T-cell (primary cell): ENCODE measurements at regions of chr6 and their contacts with region 1.

Region 1: DNA sequence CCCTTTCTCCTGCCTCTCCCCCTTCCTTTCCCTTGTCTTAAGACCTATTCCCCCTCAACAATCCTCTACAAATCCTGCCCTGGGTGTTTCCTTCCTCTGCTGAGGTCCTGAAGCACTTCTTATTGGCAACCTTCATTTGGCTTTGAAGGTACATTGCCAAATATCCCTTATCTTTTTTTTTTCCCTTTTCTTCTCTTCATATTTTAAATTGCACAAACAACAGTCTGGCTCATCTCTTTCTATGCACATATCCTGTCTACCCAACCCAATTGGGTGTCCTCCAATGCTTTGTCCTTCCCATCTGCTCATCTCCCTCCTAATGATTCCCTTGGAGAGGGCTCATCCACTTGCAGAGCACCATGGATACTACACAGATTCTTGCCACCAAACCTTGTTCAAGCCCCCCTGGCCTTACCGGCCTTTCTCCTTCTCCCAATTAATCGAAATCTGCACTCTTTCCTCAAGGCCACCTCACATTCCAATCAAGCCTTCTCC is 537.9 kb upstream of the JARID2 start:
- DNase-seq: no peak
- ATAC-seq: no peak
- H3K4me3 ChIP-seq: no peak overlapping the region
- H3K4me3 Mint-ChIP-seq: no peak overlapping the region
- H3K27ac ChIP-seq: no peak overlapping the region
- H3K27ac Mint-ChIP-seq: no peak overlapping the region
- H3K4me1 ChIP-seq: peaks cover 0 to 7% of the 10 kb centered on the region in 2 experiments
- H3K4me1 Mint-ChIP-seq: peaks cover 6 to 18% (median 9%) of the 10 kb centered on the region in 3 donors
- H3K27me3 ChIP-seq: peaks cover 0 to 4% of the 10 kb centered on the region in 2 experiments
- H3K27me3 Mint-ChIP-seq: no peaks in the 10 kb centered on the region

Region 2: GRCh38 chr6:13838616-13839015 is 869.4 kb before region 1 on chr6:
- CTCF ChIA-PET with region 1: no interaction called
- POLR2A ChIA-PET with region 1: no interaction called
- DNase-seq: no peak
- ATAC-seq: no peak
- H3K4me3 ChIP-seq: no peak overlapping the region
- H3K4me3 Mint-ChIP-seq: no peak overlapping the region
- H3K27ac ChIP-seq: no peak overlapping the region
- H3K27ac Mint-ChIP-seq: no peak overlapping the region
- H3K4me1 ChIP-seq: no peaks in the 10 kb centered on the region
- H3K4me1 Mint-ChIP-seq: no peaks in the 10 kb centered on the region
- H3K27me3 ChIP-seq: no peaks in the 10 kb centered on the region
- H3K27me3 Mint-ChIP-seq: peaks cover 0 to 2% of the 10 kb centered on the region in 2 donors

Region 3: GRCh38 chr6:14559754-14560536 is 148.1 kb before region 1 on chr6:
- CTCF ChIA-PET with region 1: no interaction called
- POLR2A ChIA-PET with region 1: no interaction called
- DNase-seq: no peak
- ATAC-seq: no peak
- H3K4me3 ChIP-seq: no peak overlapping the region
- H3K4me3 Mint-ChIP-seq: no peak overlapping the region
- H3K27ac ChIP-seq: no peak overlapping the region
- H3K27ac Mint-ChIP-seq: no peak overlapping the region
- H3K4me1 ChIP-seq: no peaks in the 10 kb centered on the region
- H3K4me1 Mint-ChIP-seq: no peaks in the 10 kb centered on the region
- H3K27me3 ChIP-seq: peaks cover 0 to 2% of the 10 kb centered on the region in 2 experiments
- H3K27me3 Mint-ChIP-seq: no peaks in the 10 kb centered on the region

Region 4: GRCh38 chr6:15171026-15171425 is 463.0 kb after region 1 on chr6:
- CTCF ChIA-PET with region 1: no interaction called
- POLR2A ChIA-PET with region 1: interaction called in 1 of 2 experiments, 13 read pairs
- DNase-seq: no peak
- ATAC-seq: no peak
- H3K4me3 ChIP-seq: no peak overlapping the region
- H3K4me3 Mint-ChIP-seq: no peak overlapping the region
- H3K27ac ChIP-seq: no peak overlapping the region
- H3K27ac Mint-ChIP-seq: no peak overlapping the region
- H3K4me1 ChIP-seq: no peaks in the 10 kb centered on the region
- H3K4me1 Mint-ChIP-seq: no peaks in the 10 kb centered on the region
- H3K27me3 ChIP-seq: no peaks in the 10 kb centered on the region
- H3K27me3 Mint-ChIP-seq: no peaks in the 10 kb centered on the region